ENCODE measurements at regions of chr6 and their contacts with region 1.

Region 1: DNA sequence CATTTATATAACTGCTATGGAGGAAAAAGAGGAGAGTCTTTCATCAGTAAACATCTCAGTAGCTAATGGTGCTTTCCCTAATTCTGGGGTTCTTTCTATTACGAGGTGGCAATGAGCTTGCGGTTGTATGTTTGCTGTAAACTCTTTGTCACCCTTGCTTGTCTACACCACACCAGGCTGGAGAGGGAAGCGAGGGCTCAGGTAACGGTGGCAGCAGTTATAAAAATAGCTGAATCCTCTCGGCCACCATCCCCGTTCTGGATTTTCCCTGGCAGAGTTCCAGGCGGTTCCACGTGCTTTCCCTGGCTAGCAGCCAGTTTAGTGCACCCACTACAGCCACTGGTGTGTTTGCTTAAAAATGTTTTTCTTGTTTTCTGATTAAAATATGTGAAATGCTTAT is 39.0 kb downstream of the MAS1 start:
- DNase-seq: no peak
- H3K4me3 Mint-ChIP-seq: no peak overlapping the region
- H3K27ac Mint-ChIP-seq: no peak overlapping the region
- H3K4me1 Mint-ChIP-seq: peaks cover 23% of the 10 kb centered on the region
- H3K27me3 Mint-ChIP-seq: peaks cover 20% of the 10 kb centered on the region

Region 2: GRCh38 chr6:159726918-159727716 is 202.7 kb before region 1 on chr6 and contains the start of gene WTAP:
- intact Hi-C with region 1: loop called (anchors 1 kb)
- DNase-seq: peak; percentile 98
- H3K4me3 Mint-ChIP-seq: peak within 1 kb of the TSS; percentile 96
- H3K27ac Mint-ChIP-seq: peak within 1 kb of the TSS; percentile 98
- H3K4me1 Mint-ChIP-seq: peaks cover 34% of the 10 kb centered on the region
- H3K27me3 Mint-ChIP-seq: no peaks in the 10 kb centered on the region
- total RNA-seq, gene WTAP: 107 and 109 TPM in 2 replicates

Region 3: DNA sequence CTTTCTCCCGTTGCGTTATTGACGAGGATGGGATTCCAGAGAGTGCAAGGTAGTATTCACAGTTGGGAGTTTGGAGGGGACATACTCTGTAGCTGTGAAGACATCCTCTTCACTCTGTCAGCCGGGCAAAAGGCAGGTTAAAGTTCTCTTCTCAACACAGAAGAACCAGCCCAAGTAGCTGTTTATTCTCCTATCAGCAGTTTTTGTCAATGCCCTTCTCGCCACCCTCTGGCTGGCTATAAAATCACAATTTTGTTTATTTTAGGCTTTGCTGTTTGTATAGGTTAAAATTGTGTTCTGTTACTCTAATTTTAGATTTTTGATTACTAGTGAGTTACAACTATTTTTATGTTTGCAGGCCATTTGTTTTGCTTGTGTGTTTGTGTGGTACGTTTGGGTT is 76.9 kb before region 1 on chr6:
- intact Hi-C with region 1: no loop called
- DNase-seq: peak; percentile 72
- H3K4me3 Mint-ChIP-seq: no peak overlapping the region
- H3K27ac Mint-ChIP-seq: no peak overlapping the region
- H3K4me1 Mint-ChIP-seq: no peaks in the 10 kb centered on the region
- H3K27me3 Mint-ChIP-seq: peaks cover 33% of the 10 kb centered on the region

Region 4: GRCh38 chr6:159899994-159900745 is 29.6 kb before region 1 on chr6:
- intact Hi-C with region 1: no loop called
- DNase-seq: no peak
- H3K4me3 Mint-ChIP-seq: no peak overlapping the region
- H3K27ac Mint-ChIP-seq: no peak overlapping the region
- H3K4me1 Mint-ChIP-seq: no peaks in the 10 kb centered on the region
- H3K27me3 Mint-ChIP-seq: no peaks in the 10 kb centered on the region

Region 5: GRCh38 chr6:159913862-159914564 is 15.8 kb before region 1 on chr6:
- intact Hi-C with region 1: loop called (anchors 2 kb)
- DNase-seq: no peak
- H3K4me3 Mint-ChIP-seq: no peak overlapping the region
- H3K27ac Mint-ChIP-seq: peak overlapping the region; percentile 2
- H3K4me1 Mint-ChIP-seq: peaks cover 8% of the 10 kb centered on the region
- H3K27me3 Mint-ChIP-seq: peaks cover 24% of the 10 kb centered on the region

Region 6: GRCh38 chr6:160137989-160138835 is 208.4 kb after region 1 on chr6:
- intact Hi-C with region 1: loop called (anchors 1 kb)
- DNase-seq: peak; percentile 89
- H3K4me3 Mint-ChIP-seq: no peak overlapping the region
- H3K27ac Mint-ChIP-seq: peak overlapping the region; percentile 35
- H3K4me1 Mint-ChIP-seq: peaks cover 15% of the 10 kb centered on the region
- H3K27me3 Mint-ChIP-seq: no peaks in the 10 kb centered on the region

Measured in activated CD4-positive, alpha-beta T cell treated with anti-CD3 and anti-CD28 coated beads, Interleukin-2, amount 10 ng/mL, durations not matched to agents 24 days and 14 days (primary cell).